Lower leg skin (tissue), 4 donors: ENCODE measurements at regions of chr10 and their contacts with region 1.

Region 1: GRCh38 chr10:131900350-131901146 is at the start of gene PPP2R2D:
- DNase-seq: peak; percentile 91 to 99
- H3K4me3 ChIP-seq: peak within 1 kb of the TSS; percentile 85
- CTCF ChIP-seq: no peak
- POLR2A ChIP-seq: no peak
- total RNA-seq, gene PPP2R2D: 23.9 to 48.6 (median 36.7) TPM

Region 2: GRCh38 chr10:130974166-130974565 is 926.4 kb before region 1 on chr10:
- intact Hi-C with region 1: no loop called
- DNase-seq: peak in 1 of 2 donors; percentile 34
- H3K4me3 ChIP-seq: no peak overlapping the region
- CTCF ChIP-seq: no peak
- POLR2A ChIP-seq: no peak

Region 3: GRCh38 chr10:131772441-131772840 is 128.1 kb before region 1 on chr10:
- intact Hi-C with region 1: no loop called
- DNase-seq: no peak
- H3K4me3 ChIP-seq: no peak overlapping the region
- CTCF ChIP-seq: no peak
- POLR2A ChIP-seq: no peak

Region 4: DNA sequence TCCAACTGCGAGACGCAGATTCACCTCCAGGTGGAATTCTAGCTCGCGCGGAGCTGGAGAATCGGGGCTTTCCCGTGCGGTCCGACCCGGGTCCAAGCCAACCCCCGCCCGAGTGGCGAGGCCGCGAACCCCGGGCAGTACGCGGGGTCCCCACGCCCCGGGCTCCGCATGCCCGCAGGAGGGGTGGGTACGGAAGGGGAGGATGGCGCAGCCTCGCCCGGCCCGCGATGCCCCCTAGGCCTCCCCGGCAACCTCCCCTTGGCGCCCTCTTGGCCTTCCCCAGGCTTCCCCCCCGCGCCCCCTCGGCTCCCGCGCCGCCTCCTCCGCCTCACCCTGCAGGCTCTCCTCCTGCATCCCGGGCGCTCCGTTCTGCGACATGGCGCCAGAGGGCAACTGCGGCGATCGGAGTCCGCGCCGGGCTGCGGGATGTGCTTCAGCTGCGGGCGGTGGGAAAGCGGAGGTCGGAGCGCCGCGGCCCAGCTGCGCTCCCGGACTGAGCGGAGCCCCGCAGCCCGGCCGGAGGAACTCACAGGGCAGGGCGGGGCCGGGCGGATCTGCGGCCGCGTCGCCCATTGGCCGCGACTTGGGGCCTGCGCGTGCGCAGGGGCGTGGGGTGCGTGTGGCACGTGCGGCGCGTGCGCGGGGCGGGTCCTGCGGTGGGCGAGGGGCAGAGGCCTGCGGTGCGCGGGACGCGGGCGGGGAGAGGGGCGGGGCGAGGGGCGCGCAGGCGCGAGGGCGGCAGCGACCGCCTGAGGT is 81.1 kb after region 1 on chr10 and contains the start of gene BNIP3:
- intact Hi-C with region 1: loop called (anchors 10 kb)
- DNase-seq: peak; percentile 91 to 99
- H3K4me3 ChIP-seq: peak within 1 kb of the TSS; percentile 77
- CTCF ChIP-seq: no peak
- POLR2A ChIP-seq: peak in 1 of 2 donors; percentile 55
- total RNA-seq, gene BNIP3: 78.4 to 241 (median 168) TPM

Region 5: DNA sequence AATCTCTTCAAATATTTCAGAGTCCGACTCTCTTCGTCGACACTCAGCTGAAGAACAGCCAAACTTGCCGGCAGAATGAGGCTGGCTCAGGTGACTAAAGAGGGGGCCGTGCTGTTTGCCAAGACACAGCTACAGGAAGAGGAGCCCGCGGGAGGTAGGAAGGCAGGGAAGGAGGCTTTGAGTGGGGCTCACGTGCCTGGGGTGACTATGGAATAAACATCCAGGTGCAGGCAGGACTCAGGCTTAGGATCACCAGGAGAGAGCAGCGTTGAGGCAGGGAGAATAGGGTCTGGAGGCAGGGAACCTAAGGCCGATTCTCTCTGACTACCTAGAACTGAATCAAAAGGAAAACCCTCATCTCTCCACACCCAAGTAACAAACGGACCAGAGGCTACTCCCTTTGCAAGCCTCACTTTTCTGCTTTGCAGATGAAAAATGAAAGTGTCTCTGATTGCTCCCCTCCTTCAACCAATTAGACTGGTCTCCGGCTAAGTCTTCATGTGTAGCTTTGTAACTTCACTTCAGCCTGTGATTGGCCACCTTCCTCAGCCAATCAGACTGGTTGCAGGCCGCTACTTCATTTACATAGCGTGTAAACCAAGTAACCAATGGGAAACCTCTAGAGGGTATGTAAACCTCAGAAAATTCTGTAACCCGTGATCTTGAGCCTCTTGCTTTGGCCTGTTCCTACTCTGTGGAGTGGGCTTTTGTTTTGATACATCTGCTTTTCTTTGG is 100.9 kb after region 1 on chr10:
- intact Hi-C with region 1: loop called (anchors 10 kb)
- DNase-seq: peak in 1 of 2 donors; percentile 70
- H3K4me3 ChIP-seq: no peak overlapping the region
- CTCF ChIP-seq: no peak
- POLR2A ChIP-seq: no peak

Region 6: GRCh38 chr10:132096223-132096622 is 195.7 kb after region 1 on chr10:
- intact Hi-C with region 1: no loop called
- DNase-seq: no peak
- H3K4me3 ChIP-seq: no peak overlapping the region
- CTCF ChIP-seq: no peak
- POLR2A ChIP-seq: no peak